Activated B cell treated with CpG ODN at 0.5 μM for 24 hours (primary cell): ENCODE measurements at regions of chr6 and their contacts with region 1.

Region 1: DNA sequence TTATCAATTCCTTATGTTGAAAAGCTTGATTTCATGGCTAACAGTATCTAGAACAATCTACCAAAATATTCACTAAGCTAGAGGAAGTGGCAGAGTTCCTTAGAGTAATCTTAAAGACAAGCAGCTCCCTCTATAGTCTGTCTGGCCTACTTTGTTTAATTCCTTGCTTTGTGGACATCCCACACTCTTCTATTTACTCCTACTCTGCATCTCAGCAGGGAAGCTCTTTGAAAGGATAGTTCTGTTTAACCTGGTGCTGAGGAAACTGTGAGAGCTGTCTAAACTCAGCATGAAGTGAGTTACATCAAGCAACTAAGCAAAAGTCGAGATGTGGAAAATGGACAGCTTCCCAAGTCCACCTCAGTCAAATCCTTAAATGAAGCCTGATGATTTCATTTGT is 4.3 kb downstream of the REV3L start:
- DNase-seq: no peak
- ATAC-seq: no peak
- H3K4me3 Mint-ChIP-seq: no peak overlapping the region
- H3K27ac Mint-ChIP-seq: peak overlapping the region; percentile 77
- H3K4me1 Mint-ChIP-seq: peaks cover 33% of the 10 kb centered on the region
- H3K27me3 Mint-ChIP-seq: no peaks in the 10 kb centered on the region
- CTCF ChIP-seq: no peak

Region 2: GRCh38 chr6:111011360-111012142 is 467.2 kb before region 1 on chr6:
- CTCF ChIA-PET with region 1: no interaction called
- POLR2A ChIA-PET with region 1: no interaction called
- intact Hi-C with region 1: loop called (anchors 2 kb)
- DNase-seq: no peak
- ATAC-seq: peak; percentile 50
- H3K4me3 Mint-ChIP-seq: no peak overlapping the region
- H3K27ac Mint-ChIP-seq: no peak overlapping the region
- H3K4me1 Mint-ChIP-seq: peaks cover 4% of the 10 kb centered on the region
- H3K27me3 Mint-ChIP-seq: no peaks in the 10 kb centered on the region
- CTCF ChIP-seq: no peak

Region 3: DNA sequence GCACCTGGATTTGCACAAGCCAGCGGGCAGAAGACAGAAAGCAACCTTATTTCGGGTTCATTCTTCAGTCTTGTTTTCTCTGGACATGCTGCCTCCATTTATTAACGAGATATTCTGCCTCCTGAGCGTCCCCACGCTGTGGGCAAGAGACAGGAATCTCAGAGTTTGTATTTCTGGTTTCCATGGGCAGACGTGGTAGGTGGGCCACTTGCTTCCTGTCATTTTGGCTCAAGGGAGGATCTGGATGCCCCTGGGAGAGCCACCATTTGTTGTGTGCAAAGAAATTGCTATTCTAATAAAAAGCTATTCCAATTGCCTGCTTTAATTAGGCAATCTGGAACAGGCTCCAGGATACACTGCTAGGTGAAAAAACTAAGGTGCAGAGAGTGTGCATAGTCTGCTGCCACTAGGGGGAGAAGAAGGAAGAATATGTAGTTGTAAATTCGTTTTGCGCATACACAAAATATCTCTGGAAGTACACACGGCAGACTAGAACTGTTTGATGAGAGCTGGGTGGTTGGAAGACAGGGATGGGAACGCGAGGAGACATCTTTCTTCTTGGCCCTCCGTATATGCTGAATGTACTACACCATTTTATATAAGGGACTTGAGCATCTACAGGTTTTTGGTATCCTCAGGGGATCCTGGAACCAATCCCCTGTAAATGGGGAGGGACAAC is 421.5 kb before region 1 on chr6:
- CTCF ChIA-PET with region 1: interaction called, 11 read pairs
- POLR2A ChIA-PET with region 1: no interaction called
- intact Hi-C with region 1: loop called (anchors 1 kb)
- DNase-seq: no peak
- ATAC-seq: peak; percentile 21
- H3K4me3 Mint-ChIP-seq: no peak overlapping the region
- H3K27ac Mint-ChIP-seq: no peak overlapping the region
- H3K4me1 Mint-ChIP-seq: no peaks in the 10 kb centered on the region
- H3K27me3 Mint-ChIP-seq: peaks cover 4% of the 10 kb centered on the region
- CTCF ChIP-seq: peak; percentile 29

Region 4: DNA sequence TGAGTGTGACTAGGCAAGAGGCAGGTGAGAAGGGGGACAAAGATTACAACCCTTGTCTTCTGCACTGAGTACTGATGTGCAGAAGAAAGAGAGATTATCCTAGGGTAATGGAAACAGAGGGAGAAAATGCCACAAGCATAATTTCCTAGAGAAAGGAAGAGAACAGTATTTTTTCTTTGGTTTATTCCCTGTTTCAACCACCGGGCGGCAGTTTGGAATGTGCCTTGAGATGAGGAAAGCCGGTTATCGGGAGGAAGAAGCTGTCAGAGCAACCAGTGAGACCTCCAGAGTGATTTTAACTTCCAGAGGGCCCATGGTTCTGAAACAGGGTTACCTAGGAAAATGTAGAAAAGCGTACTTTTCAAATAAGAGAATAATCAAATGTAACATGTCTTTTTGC is 117.1 kb before region 1 on chr6:
- CTCF ChIA-PET with region 1: interaction called, 21 read pairs
- POLR2A ChIA-PET with region 1: interaction called, 5 read pairs
- intact Hi-C with region 1: loop called (anchors 1 kb)
- DNase-seq: no peak
- ATAC-seq: no peak
- H3K4me3 Mint-ChIP-seq: no peak overlapping the region
- H3K27ac Mint-ChIP-seq: no peak overlapping the region
- H3K4me1 Mint-ChIP-seq: no peaks in the 10 kb centered on the region
- H3K27me3 Mint-ChIP-seq: no peaks in the 10 kb centered on the region
- CTCF ChIP-seq: no peak

Region 5: DNA sequence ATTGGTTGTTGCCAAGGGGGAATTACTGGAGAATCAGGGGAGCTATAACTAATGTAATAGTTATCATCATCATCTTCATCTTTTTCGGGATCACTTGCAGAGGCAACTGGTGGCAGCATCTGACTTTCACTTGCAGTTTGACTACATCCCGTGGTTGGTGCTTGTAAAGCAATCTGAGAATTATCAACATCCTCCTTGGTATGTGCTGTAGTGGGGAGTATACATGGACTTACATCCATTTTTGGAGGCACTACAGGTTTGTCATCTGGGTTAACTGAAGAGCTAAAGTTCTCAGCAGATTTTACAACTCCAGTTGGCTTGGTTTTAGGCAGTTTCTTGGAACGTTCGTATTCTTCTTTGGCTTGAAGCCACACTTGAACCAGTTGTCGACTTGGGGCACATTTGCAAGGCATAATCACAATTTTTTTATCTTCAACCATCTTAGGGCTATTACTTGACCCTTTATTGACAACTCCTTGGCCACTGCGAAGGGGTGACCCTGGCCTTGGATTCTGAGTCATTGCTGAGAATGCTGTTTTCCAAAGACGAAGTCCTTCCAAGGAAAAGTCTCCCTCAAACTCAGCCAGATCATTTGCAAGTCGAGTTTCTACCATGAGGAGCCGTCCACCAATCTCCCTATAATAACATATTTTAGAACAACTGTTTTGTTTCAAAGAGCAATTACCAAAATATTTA is 111.2 kb before region 1 on chr6:
- CTCF ChIA-PET with region 1: interaction called, 10 read pairs
- POLR2A ChIA-PET with region 1: interaction called, 10 read pairs
- intact Hi-C with region 1: no loop called
- DNase-seq: no peak
- ATAC-seq: no peak
- H3K4me3 Mint-ChIP-seq: no peak overlapping the region
- H3K27ac Mint-ChIP-seq: no peak overlapping the region
- H3K4me1 Mint-ChIP-seq: no peaks in the 10 kb centered on the region
- H3K27me3 Mint-ChIP-seq: no peaks in the 10 kb centered on the region
- CTCF ChIP-seq: no peak

Region 6: GRCh38 chr6:111406200-111406721 is 72.5 kb before region 1 on chr6:
- CTCF ChIA-PET with region 1: interaction called, 17 read pairs
- POLR2A ChIA-PET with region 1: interaction called, 14 read pairs
- intact Hi-C with region 1: loop called (anchors 1 kb)
- DNase-seq: no peak
- ATAC-seq: peak; percentile 96
- H3K4me3 Mint-ChIP-seq: peak overlapping the region; percentile 47
- H3K27ac Mint-ChIP-seq: peak overlapping the region; percentile 90
- H3K4me1 Mint-ChIP-seq: peaks cover 36% of the 10 kb centered on the region
- H3K27me3 Mint-ChIP-seq: no peaks in the 10 kb centered on the region
- CTCF ChIP-seq: no peak

Region 7: DNA sequence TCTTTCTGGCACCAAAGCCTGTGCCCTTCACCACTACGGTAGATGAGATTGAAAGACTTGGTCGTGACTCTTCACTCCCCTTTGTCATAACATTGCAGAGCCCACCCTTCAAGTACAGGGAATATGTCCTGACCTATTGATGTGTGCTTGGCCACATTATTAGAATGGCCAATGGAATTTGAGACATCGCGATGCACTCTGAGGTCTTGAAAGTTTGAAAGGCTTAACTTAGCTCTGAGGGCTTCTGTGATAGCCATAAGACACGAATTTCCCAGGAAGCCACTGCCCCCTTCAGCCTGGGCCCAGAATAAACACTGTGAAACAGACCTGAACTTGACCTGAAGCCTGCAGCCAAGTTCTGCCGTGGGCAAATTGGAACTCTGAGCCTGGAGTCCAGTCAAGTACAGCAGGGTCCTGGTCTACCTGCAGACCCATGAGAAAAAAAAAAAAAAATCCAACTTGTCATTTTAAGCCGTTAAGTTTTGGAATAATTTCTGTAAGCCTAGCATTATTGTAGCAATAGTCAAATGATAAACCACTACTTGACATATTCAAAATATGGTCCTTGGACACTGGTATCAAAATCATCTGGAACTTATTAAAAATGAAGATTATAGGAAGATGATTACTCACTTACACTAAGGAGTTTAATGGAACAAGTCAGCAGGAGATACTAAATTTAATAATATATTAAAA is 163.9 kb after region 1 on chr6:
- CTCF ChIA-PET with region 1: interaction called, 5 read pairs
- POLR2A ChIA-PET with region 1: interaction called, 4 read pairs
- intact Hi-C with region 1: loop called (anchors 1 kb)
- DNase-seq: no peak
- ATAC-seq: peak; percentile 69
- H3K4me3 Mint-ChIP-seq: no peak overlapping the region
- H3K27ac Mint-ChIP-seq: no peak overlapping the region
- H3K4me1 Mint-ChIP-seq: no peaks in the 10 kb centered on the region
- H3K27me3 Mint-ChIP-seq: no peaks in the 10 kb centered on the region
- CTCF ChIP-seq: no peak

Region 8: GRCh38 chr6:112613410-112613809 is 1134.7 kb after region 1 on chr6:
- CTCF ChIA-PET with region 1: no interaction called
- POLR2A ChIA-PET with region 1: no interaction called
- intact Hi-C with region 1: no loop called
- DNase-seq: no peak
- ATAC-seq: no peak
- H3K4me3 Mint-ChIP-seq: no peak overlapping the region
- H3K27ac Mint-ChIP-seq: no peak overlapping the region
- H3K4me1 Mint-ChIP-seq: no peaks in the 10 kb centered on the region
- H3K27me3 Mint-ChIP-seq: no peaks in the 10 kb centered on the region
- CTCF ChIP-seq: no peak